Activated CD4-positive, alpha-beta T cell treated with anti-CD3 and anti-CD28 coated beads for 36 hours (primary cell): ENCODE measurements at regions of chr6 and their contacts with region 1.

Region 1: GRCh38 chr6:70369332-70369950 is 43.9 kb upstream of the FAM135A start:
- DNase-seq: peak; percentile 79
- ATAC-seq: peak; percentile 84
- H3K4me3 Mint-ChIP-seq: no peak overlapping the region
- H3K27ac Mint-ChIP-seq: no peak overlapping the region
- H3K4me1 Mint-ChIP-seq: no peaks in the 10 kb centered on the region
- H3K27me3 Mint-ChIP-seq: peaks cover 12% of the 10 kb centered on the region

Region 2: GRCh38 chr6:70380271-70380670 is 10.8 kb after region 1 on chr6:
- CTCF ChIA-PET with region 1: interaction called, 14 read pairs
- POLR2A ChIA-PET with region 1: no interaction called
- intact Hi-C with region 1: no loop called
- DNase-seq: no peak
- ATAC-seq: no peak
- H3K4me3 Mint-ChIP-seq: no peak overlapping the region
- H3K27ac Mint-ChIP-seq: no peak overlapping the region
- H3K4me1 Mint-ChIP-seq: no peaks in the 10 kb centered on the region
- H3K27me3 Mint-ChIP-seq: peaks cover 9% of the 10 kb centered on the region

Region 3: DNA sequence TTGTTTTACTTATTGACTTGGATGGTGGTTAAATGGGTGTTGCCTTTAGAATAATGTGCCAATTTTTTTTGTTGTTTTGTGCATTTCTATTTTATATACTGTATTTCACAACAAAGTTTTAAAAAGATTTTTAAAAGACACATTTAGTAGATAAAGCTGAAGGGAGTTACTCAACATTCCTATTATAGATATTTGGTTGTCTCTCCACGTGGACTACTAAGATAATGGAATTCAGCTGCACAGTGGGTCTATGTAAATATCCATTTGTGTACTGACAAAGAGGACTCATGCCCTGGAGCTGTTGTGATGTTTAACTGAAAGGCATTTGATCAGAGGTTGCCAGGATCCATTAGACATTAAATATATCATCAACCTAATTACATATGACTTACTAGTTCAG is 20.6 kb after region 1 on chr6:
- CTCF ChIA-PET with region 1: interaction called, 36 read pairs
- POLR2A ChIA-PET with region 1: interaction called, 3 read pairs
- intact Hi-C with region 1: no loop called
- DNase-seq: no peak
- ATAC-seq: no peak
- H3K4me3 Mint-ChIP-seq: no peak overlapping the region
- H3K27ac Mint-ChIP-seq: no peak overlapping the region
- H3K4me1 Mint-ChIP-seq: no peaks in the 10 kb centered on the region
- H3K27me3 Mint-ChIP-seq: peaks cover 16% of the 10 kb centered on the region